ENCODE measurements at regions of chrX and their contacts with region 1.

Region 1: DNA sequence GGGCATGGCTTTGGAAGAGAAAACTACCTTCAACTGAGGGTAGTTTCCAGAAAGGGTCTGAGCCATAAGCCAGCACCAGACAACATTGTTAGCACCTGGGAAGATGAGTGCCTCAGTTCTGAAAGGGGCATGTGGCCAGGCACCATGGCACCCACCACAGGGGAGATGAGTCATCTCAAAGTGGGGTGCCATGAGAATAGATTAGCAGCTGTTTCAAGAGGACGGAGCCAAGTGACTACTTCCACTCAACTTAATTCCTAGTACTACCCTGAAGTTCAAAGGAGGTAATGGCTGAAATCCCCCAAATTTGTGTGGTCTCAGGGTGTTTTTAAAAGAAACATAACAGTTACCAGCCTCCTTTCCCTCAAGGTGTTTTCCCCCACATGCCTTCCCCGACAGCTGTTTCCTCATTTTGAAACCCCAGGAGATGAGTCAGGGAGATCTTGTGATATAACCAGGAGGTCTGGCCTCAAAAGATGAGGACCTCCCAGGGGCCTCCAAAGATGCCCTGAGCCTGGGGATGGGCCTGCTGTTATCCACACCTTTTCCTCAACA is 27.8 kb upstream of the FTHL17 start:
- DNase-seq: peak; percentile 67
- H3K4me3 Mint-ChIP-seq: no peak overlapping the region
- H3K27ac Mint-ChIP-seq: no peak overlapping the region
- H3K4me1 Mint-ChIP-seq: peaks cover 4% of the 10 kb centered on the region
- H3K27me3 Mint-ChIP-seq: no peaks in the 10 kb centered on the region

Region 2: GRCh38 chrX:30652527-30653414 is 446.8 kb before region 1 on chrX:
- CTCF ChIA-PET with region 1: no interaction called
- intact Hi-C with region 1: loop called (anchors 2 kb)
- DNase-seq: peak; percentile 93
- H3K4me3 Mint-ChIP-seq: peak overlapping the region; percentile 90
- H3K27ac Mint-ChIP-seq: peak overlapping the region; percentile 93
- H3K4me1 Mint-ChIP-seq: peaks cover 31% of the 10 kb centered on the region
- H3K27me3 Mint-ChIP-seq: no peaks in the 10 kb centered on the region

Region 3: GRCh38 chrX:31061091-31061490 is 38.5 kb before region 1 on chrX:
- CTCF ChIA-PET with region 1: no interaction called
- intact Hi-C with region 1: loop called (anchors 5 kb)
- DNase-seq: no peak
- H3K4me3 Mint-ChIP-seq: no peak overlapping the region
- H3K27ac Mint-ChIP-seq: no peak overlapping the region
- H3K4me1 Mint-ChIP-seq: no peaks in the 10 kb centered on the region
- H3K27me3 Mint-ChIP-seq: no peaks in the 10 kb centered on the region

Region 4: GRCh38 chrX:31070057-31070468 is 29.6 kb before region 1 on chrX:
- CTCF ChIA-PET with region 1: no interaction called
- intact Hi-C with region 1: loop called (anchors 1 kb)
- DNase-seq: peak; percentile 52
- H3K4me3 Mint-ChIP-seq: no peak overlapping the region
- H3K27ac Mint-ChIP-seq: no peak overlapping the region
- H3K4me1 Mint-ChIP-seq: peaks cover 12% of the 10 kb centered on the region
- H3K27me3 Mint-ChIP-seq: no peaks in the 10 kb centered on the region

Region 5: GRCh38 chrX:31178064-31178768 is 78.6 kb after region 1 on chrX:
- CTCF ChIA-PET with region 1: no interaction called
- intact Hi-C with region 1: loop called (anchors 1 kb)
- DNase-seq: no peak
- H3K4me3 Mint-ChIP-seq: no peak overlapping the region
- H3K27ac Mint-ChIP-seq: no peak overlapping the region
- H3K4me1 Mint-ChIP-seq: peaks cover 2% of the 10 kb centered on the region
- H3K27me3 Mint-ChIP-seq: no peaks in the 10 kb centered on the region

Region 6: GRCh38 chrX:31213941-31214340 is 114.3 kb after region 1 on chrX:
- CTCF ChIA-PET with region 1: no interaction called
- intact Hi-C with region 1: no loop called
- DNase-seq: peak; percentile 21
- H3K4me3 Mint-ChIP-seq: no peak overlapping the region
- H3K27ac Mint-ChIP-seq: no peak overlapping the region
- H3K4me1 Mint-ChIP-seq: no peaks in the 10 kb centered on the region
- H3K27me3 Mint-ChIP-seq: no peaks in the 10 kb centered on the region

Measured in activated naive CD4-positive, alpha-beta T cell treated with anti-CD3 and anti-CD28 coated beads for 36 hours (primary cell).